ENCODE measurements at regions of chr5 and their contacts with region 1.

Region 1: GRCh38 chr5:173554038-173554954 is 62.2 kb downstream of the BOD1 start:
- DNase-seq: no peak

Region 2: DNA sequence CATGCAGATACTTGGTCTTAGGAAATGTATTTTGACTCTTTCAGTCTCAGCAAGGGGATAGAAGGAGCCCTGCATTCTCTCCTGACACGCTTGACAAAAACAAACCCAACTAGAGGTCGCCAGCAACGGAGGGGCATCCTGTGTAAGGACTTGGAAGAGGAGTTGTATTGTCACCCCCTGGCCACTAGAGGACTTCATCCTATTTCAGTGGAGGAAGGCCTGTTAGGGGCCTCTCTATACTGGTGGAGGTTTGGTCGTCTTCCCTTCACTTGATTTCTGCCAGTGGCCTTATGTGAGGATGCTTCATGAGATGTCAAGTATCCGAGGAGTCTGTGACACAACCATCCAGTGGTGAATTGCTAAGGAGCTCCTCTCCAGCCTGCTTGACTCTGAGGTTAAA is 103.3 kb before region 1 on chr5:
- intact Hi-C with region 1: loop called in 1 of 2 experiments (anchors 10 kb)
- DNase-seq: no peak

Measured in posterior vena cava (tissue), 2 donors.